AG04450 (cell line): ENCODE measurements at regions of chr5 and their contacts with region 1.

Region 1: DNA sequence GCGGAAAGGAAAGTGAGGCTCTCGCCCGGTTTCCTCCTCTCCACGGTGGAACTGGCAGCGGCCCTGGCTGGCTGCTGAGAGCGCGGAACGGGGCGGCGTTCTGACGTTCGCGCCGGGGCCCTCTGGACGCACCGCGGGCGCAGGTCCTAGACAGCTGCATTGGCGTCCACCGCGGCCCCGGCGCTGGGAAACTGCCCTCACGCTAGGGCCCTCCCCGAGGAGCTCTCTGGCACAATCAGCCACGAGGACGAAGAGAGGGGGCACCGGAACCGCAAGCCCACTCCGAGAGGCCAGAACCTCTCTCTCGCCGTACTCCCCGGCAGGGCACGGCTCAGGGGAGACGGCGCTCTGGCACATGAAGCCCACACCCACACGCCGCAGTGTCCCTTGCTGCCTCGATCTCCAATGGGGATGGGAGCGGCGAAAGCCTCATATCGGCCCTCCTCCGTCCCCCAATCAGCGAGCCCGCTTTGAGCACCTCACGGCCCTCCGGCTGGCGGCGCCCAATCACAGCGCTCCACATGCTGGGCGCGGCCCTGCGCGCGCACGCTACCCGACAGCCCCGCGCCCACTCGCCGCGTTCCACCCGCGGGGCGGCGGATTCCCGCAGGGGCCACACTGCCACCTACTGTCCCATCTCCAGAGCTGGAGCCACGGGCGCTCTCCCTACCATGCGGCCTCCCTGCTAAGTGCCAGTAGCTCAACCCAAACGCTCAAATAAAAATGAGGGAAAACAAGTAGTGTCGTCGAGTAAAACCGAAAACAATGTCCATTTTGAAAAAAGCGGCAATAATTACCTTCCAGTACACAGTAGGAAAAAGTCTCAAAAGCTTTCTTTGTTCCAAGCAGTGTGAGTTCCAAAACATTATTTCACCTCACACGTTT is 11.8 kb downstream of the MRPS27 start:
- DNase-seq: peak; percentile 94
- H3K4me3 ChIP-seq: peak overlapping the region; percentile 88
- H3K27ac ChIP-seq: peak overlapping the region; percentile 95
- H3K27me3 ChIP-seq: no peaks in the 10 kb centered on the region
- CTCF ChIP-seq: peak; percentile 81

Region 2: DNA sequence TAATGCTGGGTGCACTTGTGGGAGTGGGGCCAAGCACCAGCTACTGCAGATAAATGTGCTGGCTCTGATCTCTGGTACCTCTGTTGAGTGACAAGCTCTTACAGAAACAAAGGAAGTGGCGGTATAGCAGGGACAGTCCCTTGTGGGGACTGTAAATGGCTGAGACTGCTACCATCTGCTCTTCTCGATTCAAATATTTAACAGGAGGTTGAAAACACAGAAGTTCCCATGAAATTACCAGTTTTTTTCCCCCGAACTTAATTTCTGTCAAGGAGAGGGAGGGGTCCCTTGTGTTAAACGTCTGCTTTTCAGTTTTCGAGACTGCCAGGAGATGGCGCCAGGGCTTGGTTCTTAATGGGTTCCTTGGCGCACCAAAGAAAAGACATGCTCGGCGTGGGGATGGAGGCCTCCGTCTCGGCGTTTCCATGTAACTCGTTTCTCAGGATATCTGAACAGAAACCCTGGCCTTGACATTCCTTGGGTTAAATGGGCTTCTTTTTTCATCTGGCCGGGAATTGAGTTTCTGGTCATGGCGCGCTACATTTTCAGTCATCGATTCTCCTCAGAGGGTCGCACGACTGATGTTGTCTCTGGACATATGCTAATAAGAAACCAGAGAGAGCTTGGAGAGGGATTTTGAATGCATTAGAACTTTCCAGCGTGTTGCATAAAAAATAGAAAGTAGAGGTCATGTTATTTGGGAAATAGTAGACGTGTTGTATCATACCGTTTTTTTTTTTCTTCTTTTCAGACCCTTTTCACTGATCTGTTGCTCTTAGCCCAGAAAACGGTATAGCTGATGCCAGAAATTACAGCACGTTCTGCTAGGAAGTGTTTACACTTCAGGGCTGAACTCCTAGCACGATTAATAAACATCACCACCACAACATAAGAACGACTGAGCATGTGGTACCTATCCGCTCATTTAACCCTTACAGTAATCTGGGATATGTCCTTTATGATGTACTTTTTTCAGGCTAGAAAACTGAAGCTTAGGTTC is 525.1 kb before region 1 on chr5:
- CTCF ChIA-PET with region 1: interaction called, 42 read pairs
- POLR2A ChIA-PET with region 1: interaction called, 3 read pairs
- DNase-seq: peak; percentile 36
- H3K4me3 ChIP-seq: peak overlapping the region; percentile 39
- H3K27ac ChIP-seq: peak overlapping the region; percentile 41
- H3K27me3 ChIP-seq: peaks cover 3% of the 10 kb centered on the region
- CTCF ChIP-seq: peak; percentile 94

Region 3: GRCh38 chr5:72319976-72320752 is 12.0 kb after region 1 on chr5 and contains the starts of genes MRPS27 and PTCD2:
- CTCF ChIA-PET with region 1: interaction called, 16 read pairs
- POLR2A ChIA-PET with region 1: interaction called, 18 read pairs
- DNase-seq: peak; percentile 98
- H3K4me3 ChIP-seq: peak within 1 kb of the TSS; percentile 98
- H3K27ac ChIP-seq: peak within 1 kb of the TSS; percentile 62
- H3K27me3 ChIP-seq: no peaks in the 10 kb centered on the region
- CTCF ChIP-seq: peak; percentile 28
- polyA plus RNA-seq, gene MRPS27: 87.5 and 98.3 TPM in 2 replicates
- polyA plus RNA-seq, gene PTCD2: 9.8 and 13.9 TPM in 2 replicates